Activated CD4-positive, alpha-beta memory T cell treated with anti-CD3 and anti-CD28 coated beads for 36 hours (primary cell): ENCODE measurements at regions of chr12 and their contacts with region 1.

Region 1: DNA sequence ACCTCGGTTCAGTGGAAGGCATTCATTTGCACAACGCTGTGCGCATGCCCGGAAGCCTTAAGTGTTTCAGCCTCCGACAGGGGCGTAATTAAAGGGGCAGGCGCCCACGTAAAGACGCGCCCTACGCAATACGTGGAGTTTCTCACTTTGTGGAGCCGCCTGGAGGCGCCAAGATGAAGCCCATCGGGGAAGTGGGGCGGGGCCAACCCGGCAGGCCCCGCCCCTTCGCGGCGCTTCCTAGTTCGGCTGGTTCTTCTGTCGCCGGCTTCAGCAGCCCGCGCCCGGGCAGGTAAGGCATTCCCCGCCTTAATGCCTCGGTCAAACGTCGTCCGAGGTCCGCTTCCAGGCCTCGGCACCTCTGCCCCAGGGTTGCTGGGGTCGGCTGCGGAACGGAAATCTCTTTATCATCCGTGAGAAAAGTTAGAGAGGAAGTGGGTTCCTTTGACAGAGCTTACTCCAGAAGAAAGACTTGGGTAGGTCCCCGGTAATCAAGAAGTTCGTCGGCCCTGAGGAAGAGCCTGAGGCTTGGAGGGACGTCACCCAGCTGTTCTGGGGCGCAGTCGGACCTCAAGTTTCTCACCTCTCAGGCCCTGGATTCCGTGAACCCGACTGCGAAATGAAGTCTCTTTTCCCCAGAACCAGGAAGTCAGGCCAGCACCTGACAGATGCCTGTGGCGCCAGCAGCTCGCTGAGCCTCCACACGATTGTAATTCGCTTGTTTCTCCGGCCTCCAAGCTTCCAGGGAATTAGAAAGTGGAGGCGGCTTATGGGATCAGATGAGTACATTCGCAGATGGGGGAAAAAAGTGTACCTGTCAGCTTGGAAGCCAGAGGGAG is at the starts of genes IRAK4 and PUS7L:
- DNase-seq: peak; percentile 97
- H3K4me3 Mint-ChIP-seq: peak within 1 kb of the TSS; percentile 94
- H3K27ac Mint-ChIP-seq: peak within 1 kb of the TSS; percentile 98
- H3K4me1 Mint-ChIP-seq: peaks cover 61% of the 10 kb centered on the region
- H3K27me3 Mint-ChIP-seq: no peaks in the 10 kb centered on the region
- total RNA-seq, gene IRAK4: 30.8 to 33.6 TPM
- total RNA-seq, gene PUS7L: 14.8 to 16.0 TPM

Region 2: GRCh38 chr12:43728117-43728516 is 30.8 kb before region 1 on chr12:
- CTCF ChIA-PET with region 1: interaction called, 4 read pairs
- POLR2A ChIA-PET with region 1: no interaction called
- intact Hi-C with region 1: loop called (anchors 1 kb)
- DNase-seq: no peak
- H3K4me3 Mint-ChIP-seq: no peak overlapping the region
- H3K27ac Mint-ChIP-seq: no peak overlapping the region
- H3K4me1 Mint-ChIP-seq: peaks cover 12% of the 10 kb centered on the region
- H3K27me3 Mint-ChIP-seq: no peaks in the 10 kb centered on the region

Region 3: DNA sequence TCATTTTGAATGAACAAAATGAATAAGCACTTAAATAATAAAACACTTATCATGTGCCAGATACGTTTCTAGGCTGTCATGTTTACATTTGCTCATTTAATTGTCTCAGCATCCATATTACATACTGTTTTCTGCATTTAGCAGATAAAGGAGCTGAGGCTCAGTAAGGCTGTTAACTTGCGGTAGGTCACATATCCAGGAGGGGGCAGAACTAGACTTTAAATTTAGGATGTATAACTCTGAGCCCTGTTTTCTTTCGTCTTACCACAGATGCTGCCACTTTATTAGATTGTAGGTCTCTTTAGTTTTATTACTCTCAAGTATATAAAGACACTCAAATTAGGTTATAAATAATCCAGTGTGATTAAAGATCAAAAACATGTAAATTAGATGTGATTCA is 17.6 kb after region 1 on chr12:
- CTCF ChIA-PET with region 1: interaction called, 12 read pairs
- POLR2A ChIA-PET with region 1: no interaction called
- intact Hi-C with region 1: no loop called
- DNase-seq: no peak
- H3K4me3 Mint-ChIP-seq: no peak overlapping the region
- H3K27ac Mint-ChIP-seq: no peak overlapping the region
- H3K4me1 Mint-ChIP-seq: no peaks in the 10 kb centered on the region
- H3K27me3 Mint-ChIP-seq: no peaks in the 10 kb centered on the region

Region 4: GRCh38 chr12:43805860-43806736 is 47.2 kb after region 1 on chr12 and contains the start of gene TWF1:
- CTCF ChIA-PET with region 1: interaction called, 21 read pairs
- POLR2A ChIA-PET with region 1: interaction called, 32 read pairs
- intact Hi-C with region 1: loop called (anchors 1 kb)
- DNase-seq: peak; percentile 91
- H3K4me3 Mint-ChIP-seq: peak within 1 kb of the TSS; percentile 99
- H3K27ac Mint-ChIP-seq: peak within 1 kb of the TSS; percentile 99
- H3K4me1 Mint-ChIP-seq: peaks cover 31% of the 10 kb centered on the region
- H3K27me3 Mint-ChIP-seq: no peaks in the 10 kb centered on the region
- total RNA-seq, gene TWF1: 19.1 to 19.4 TPM

Region 5: DNA sequence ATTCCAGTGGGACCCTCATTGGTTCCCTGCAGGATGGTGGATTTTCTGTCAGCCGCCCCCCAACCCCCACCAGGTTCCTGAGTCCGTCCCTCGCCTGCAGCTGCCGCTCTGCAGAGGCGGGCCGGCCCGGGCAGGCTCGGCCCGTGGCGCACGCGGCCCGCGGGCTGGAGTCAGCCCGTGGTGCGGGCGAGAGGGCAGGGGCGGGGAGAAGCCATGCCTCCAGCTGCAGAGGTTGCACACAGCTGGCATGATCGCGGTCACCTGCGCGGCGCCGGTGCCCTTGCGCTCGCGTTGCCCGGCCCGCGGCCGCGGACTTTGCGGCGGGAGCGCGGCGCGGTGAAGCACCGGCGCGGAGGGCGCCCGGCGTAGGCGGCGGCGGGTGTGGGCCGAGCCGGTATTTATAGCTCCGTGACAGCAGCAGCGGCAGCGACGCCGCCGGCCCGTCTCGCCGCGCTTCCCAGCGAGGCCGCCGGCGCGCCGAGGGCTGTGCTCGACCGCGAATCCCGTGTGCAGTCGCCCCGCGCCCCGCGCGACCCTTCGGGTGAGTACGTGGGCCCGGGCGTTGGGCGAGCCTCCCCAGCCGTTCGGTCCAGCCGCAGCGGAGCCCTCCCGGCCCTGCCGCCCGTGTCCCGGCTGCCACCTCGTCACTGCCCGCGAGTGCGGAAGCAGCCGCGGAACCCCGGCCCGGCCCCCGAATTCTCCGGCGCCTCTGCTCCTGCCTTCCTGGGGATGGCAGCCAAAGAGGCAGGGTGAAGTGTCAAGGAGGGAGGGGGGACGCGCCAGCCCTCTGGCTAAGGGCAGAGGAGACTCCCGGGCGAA is 76.9 kb after region 1 on chr12 and contains the start of gene TMEM117:
- CTCF ChIA-PET with region 1: interaction called, 5 read pairs
- POLR2A ChIA-PET with region 1: interaction called, 14 read pairs
- intact Hi-C with region 1: loop called (anchors 1 kb)
- DNase-seq: peak; percentile 67
- H3K4me3 Mint-ChIP-seq: peak within 1 kb of the TSS; percentile 74
- H3K27ac Mint-ChIP-seq: peak within 1 kb of the TSS; percentile 66
- H3K4me1 Mint-ChIP-seq: peaks cover 44% of the 10 kb centered on the region
- H3K27me3 Mint-ChIP-seq: no peaks in the 10 kb centered on the region
- total RNA-seq, gene TMEM117: 1.7 TPM